Activated CD4-positive, alpha-beta T cell treated with anti-CD3 and anti-CD28 coated beads for 36 hours (primary cell): ENCODE measurements at regions of chr19 and their contacts with region 1.

Region 1: GRCh38 chr19:35213663-35214632 is 14.6 kb downstream of the FAM187B start:
- DNase-seq: peak; percentile 88
- ATAC-seq: peak; percentile 67
- H3K4me3 Mint-ChIP-seq: peak overlapping the region; percentile 41
- H3K27ac Mint-ChIP-seq: peak overlapping the region; percentile 96
- H3K4me1 Mint-ChIP-seq: peaks cover 65% of the 10 kb centered on the region
- H3K27me3 Mint-ChIP-seq: no peaks in the 10 kb centered on the region

Region 2: GRCh38 chr19:34677386-34678084 is 536.4 kb before region 1 on chr19 and contains the start of gene ZNF302:
- CTCF ChIA-PET with region 1: interaction called, 3 read pairs
- POLR2A ChIA-PET with region 1: no interaction called
- intact Hi-C with region 1: loop called in 1 of 2 experiments (anchors 5 kb)
- DNase-seq: peak; percentile 97
- ATAC-seq: peak; percentile 86
- H3K4me3 Mint-ChIP-seq: peak within 1 kb of the TSS; percentile 81
- H3K27ac Mint-ChIP-seq: peak within 1 kb of the TSS; percentile 99
- H3K4me1 Mint-ChIP-seq: peaks cover 23% of the 10 kb centered on the region
- H3K27me3 Mint-ChIP-seq: no peaks in the 10 kb centered on the region
- total RNA-seq, gene ZNF302: 17.1 to 17.6 TPM

Region 3: GRCh38 chr19:34999498-35000341 is 214.2 kb before region 1 on chr19 and contains the start of gene GRAMD1A:
- CTCF ChIA-PET with region 1: no interaction called
- POLR2A ChIA-PET with region 1: no interaction called
- intact Hi-C with region 1: loop called in 1 of 2 experiments (anchors 5 kb)
- DNase-seq: peak; percentile 87
- ATAC-seq: peak; percentile 55
- H3K4me3 Mint-ChIP-seq: peak within 1 kb of the TSS; percentile 100
- H3K27ac Mint-ChIP-seq: peak within 1 kb of the TSS; percentile 100
- H3K4me1 Mint-ChIP-seq: peaks cover 69% of the 10 kb centered on the region
- H3K27me3 Mint-ChIP-seq: no peaks in the 10 kb centered on the region
- total RNA-seq, gene GRAMD1A: 185 to 227 TPM

Region 4: DNA sequence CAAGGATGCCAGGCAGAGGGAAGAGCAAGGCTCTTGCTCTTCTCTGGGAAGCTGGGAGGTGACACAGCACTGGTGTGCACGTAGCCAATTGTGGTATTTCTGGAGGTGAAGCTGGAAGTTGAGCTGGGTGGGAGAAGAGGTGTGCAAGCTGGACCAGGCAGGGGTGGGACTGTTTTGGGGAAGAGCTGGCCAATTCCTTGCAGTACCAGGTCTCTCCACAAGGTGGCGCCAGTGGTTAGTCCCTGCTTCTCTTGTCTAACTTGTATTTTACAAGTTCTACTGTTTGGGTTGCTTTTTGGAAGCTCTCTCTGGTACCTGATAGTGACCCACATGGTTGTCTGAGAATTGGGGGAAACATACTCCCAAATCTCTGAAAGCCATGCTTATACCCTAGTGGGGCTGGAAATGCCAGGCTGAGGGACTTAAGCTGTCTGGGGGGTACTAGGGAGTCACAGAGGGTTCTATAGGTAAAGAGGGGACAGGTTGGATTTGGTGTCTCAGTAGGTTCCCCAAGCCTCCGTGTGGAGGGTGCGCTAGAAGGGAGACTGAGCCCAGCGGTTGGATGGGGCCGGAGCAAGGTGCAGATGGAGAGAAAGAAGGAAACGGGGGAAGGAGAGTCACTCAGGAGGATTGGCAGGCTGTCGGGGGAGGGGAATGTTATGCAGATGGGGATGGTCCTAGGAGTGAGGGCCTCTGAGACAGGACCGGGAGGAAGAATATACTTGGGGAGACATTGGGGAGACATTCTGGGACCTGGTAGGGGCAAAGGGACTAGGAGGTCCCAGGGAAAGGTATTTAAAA is 169.4 kb before region 1 on chr19:
- CTCF ChIA-PET with region 1: no interaction called
- POLR2A ChIA-PET with region 1: no interaction called
- intact Hi-C with region 1: loop called in 1 of 2 experiments (anchors 1 kb)
- DNase-seq: peak; percentile 79
- ATAC-seq: no peak
- H3K4me3 Mint-ChIP-seq: no peak overlapping the region
- H3K27ac Mint-ChIP-seq: no peak overlapping the region
- H3K4me1 Mint-ChIP-seq: peaks cover 25% of the 10 kb centered on the region
- H3K27me3 Mint-ChIP-seq: peaks cover 4% of the 10 kb centered on the region

Region 5: GRCh38 chr19:35154525-35155406 is 59.2 kb before region 1 on chr19 and contains the start of gene FXYD5:
- CTCF ChIA-PET with region 1: interaction called, 3 read pairs
- POLR2A ChIA-PET with region 1: no interaction called
- intact Hi-C with region 1: loop called (anchors 1 kb)
- DNase-seq: peak; percentile 93
- ATAC-seq: peak; percentile 81
- H3K4me3 Mint-ChIP-seq: peak within 1 kb of the TSS; percentile 96
- H3K27ac Mint-ChIP-seq: peak within 1 kb of the TSS; percentile 99
- H3K4me1 Mint-ChIP-seq: peaks cover 52% of the 10 kb centered on the region
- H3K27me3 Mint-ChIP-seq: no peaks in the 10 kb centered on the region
- total RNA-seq, gene FXYD5: 261 to 358 TPM

Region 6: GRCh38 chr19:35404879-35405622 is 191.1 kb after region 1 on chr19:
- CTCF ChIA-PET with region 1: no interaction called
- POLR2A ChIA-PET with region 1: no interaction called
- intact Hi-C with region 1: loop called in 1 of 2 experiments (anchors 5 kb)
- DNase-seq: peak; percentile 88
- ATAC-seq: peak; percentile 97
- H3K4me3 Mint-ChIP-seq: no peak overlapping the region
- H3K27ac Mint-ChIP-seq: peak overlapping the region; percentile 88
- H3K4me1 Mint-ChIP-seq: peaks cover 18% of the 10 kb centered on the region
- H3K27me3 Mint-ChIP-seq: peaks cover 8% of the 10 kb centered on the region

Region 7: DNA sequence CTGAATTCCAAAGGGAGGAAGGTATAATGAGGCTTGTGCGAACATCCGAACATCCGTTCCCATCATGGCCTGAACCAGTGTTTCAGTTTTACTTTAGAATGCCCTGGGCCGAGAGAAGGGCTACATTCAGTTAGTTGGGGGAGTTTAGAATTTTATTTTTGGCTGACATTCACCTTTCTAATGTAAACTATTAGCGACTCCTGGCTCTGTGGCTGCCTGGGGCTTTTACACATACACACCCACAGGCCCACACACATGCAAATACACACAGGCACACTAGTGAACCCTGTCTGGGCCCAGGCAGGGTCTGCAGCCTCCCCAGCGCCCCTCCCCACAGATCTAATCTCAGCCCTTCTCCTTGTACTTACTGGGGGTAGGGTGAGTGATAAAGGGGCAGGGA is 325.4 kb after region 1 on chr19:
- CTCF ChIA-PET with region 1: no interaction called
- POLR2A ChIA-PET with region 1: no interaction called
- intact Hi-C with region 1: no loop called
- DNase-seq: no peak
- ATAC-seq: no peak
- H3K4me3 Mint-ChIP-seq: no peak overlapping the region
- H3K27ac Mint-ChIP-seq: no peak overlapping the region
- H3K4me1 Mint-ChIP-seq: peaks cover 4% of the 10 kb centered on the region
- H3K27me3 Mint-ChIP-seq: peaks cover 2% of the 10 kb centered on the region

Region 8: GRCh38 chr19:35710784-35711723 is 497.1 kb after region 1 on chr19:
- CTCF ChIA-PET with region 1: no interaction called
- POLR2A ChIA-PET with region 1: no interaction called
- intact Hi-C with region 1: loop called in 1 of 2 experiments (anchors 2 kb)
- DNase-seq: peak; percentile 88
- ATAC-seq: peak; percentile 48
- H3K4me3 Mint-ChIP-seq: peak overlapping the region; percentile 56
- H3K27ac Mint-ChIP-seq: peak overlapping the region; percentile 100
- H3K4me1 Mint-ChIP-seq: peaks cover 43% of the 10 kb centered on the region
- H3K27me3 Mint-ChIP-seq: no peaks in the 10 kb centered on the region